ENCODE measurements at regions of chr6 and their contacts with region 1.

Region 1: DNA sequence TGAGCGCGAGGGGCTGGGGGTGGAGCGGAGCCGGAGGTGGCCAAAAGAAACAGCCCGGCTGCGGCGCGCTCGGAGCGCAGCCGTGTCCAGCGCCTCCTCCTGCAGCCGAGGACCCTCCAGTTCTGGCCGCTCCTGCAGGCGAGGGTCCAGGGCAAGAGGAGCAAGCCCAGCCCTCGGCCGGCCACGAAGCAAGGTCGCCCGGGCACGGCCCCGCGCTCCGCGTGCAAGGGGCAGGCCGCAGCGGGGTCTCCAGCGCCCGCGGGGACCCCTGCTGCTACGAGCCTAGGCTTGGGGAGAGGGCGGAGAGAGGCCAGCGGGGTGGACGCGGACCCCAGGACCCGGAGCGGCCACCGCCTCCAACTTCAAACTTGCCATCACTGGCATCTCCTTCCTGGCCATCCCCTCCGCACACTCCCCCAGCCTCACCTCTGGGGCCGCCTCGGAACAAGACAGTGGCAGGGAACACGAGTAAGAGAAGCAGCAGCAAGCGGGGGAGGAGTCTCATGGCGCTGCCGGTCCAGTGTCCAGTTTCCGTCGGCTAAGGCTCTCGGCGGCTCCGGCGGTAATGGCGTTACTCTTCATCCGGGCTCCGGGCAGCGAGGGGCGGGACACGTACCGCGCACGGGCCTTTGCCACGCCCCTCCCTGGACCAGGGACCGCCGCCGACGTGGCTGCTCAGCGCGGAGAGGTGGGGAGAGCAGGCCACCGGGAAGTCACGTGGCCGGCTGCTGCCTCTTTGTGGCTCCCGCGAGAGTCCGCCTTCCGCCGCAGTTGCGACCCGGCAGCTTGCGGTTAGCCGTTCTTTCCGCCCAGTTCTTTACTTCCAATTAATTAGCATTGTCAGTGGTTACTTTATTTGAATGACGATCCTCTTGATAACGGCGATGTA is at the start of gene SSR1:
- DNase-seq: peak; percentile 99
- H3K4me3 Mint-ChIP-seq: peak within 1 kb of the TSS; percentile 96
- H3K27ac Mint-ChIP-seq: peak within 1 kb of the TSS; percentile 98
- H3K4me1 Mint-ChIP-seq: peaks cover 38% of the 10 kb centered on the region
- H3K27me3 Mint-ChIP-seq: no peaks in the 10 kb centered on the region
- total RNA-seq, gene SSR1: 157 and 162 TPM in 2 replicates

Region 2: GRCh38 chr6:7073821-7074525 is 238.9 kb before region 1 on chr6:
- intact Hi-C with region 1: no loop called
- DNase-seq: peak; percentile 89
- H3K4me3 Mint-ChIP-seq: no peak overlapping the region
- H3K27ac Mint-ChIP-seq: peak overlapping the region; percentile 51
- H3K4me1 Mint-ChIP-seq: peaks cover 12% of the 10 kb centered on the region
- H3K27me3 Mint-ChIP-seq: peaks cover 66% of the 10 kb centered on the region

Region 3: GRCh38 chr6:7145885-7146828 is 166.7 kb before region 1 on chr6:
- intact Hi-C with region 1: loop called (anchors 5 kb)
- DNase-seq: peak; percentile 77
- H3K4me3 Mint-ChIP-seq: peak overlapping the region; percentile 67
- H3K27ac Mint-ChIP-seq: peak overlapping the region; percentile 85
- H3K4me1 Mint-ChIP-seq: peaks cover 55% of the 10 kb centered on the region
- H3K27me3 Mint-ChIP-seq: no peaks in the 10 kb centered on the region

Region 4: GRCh38 chr6:7276199-7276524 is 36.7 kb before region 1 on chr6:
- intact Hi-C with region 1: loop called (anchors 5 kb)
- DNase-seq: no peak
- H3K4me3 Mint-ChIP-seq: no peak overlapping the region
- H3K27ac Mint-ChIP-seq: no peak overlapping the region
- H3K4me1 Mint-ChIP-seq: peaks cover 6% of the 10 kb centered on the region
- H3K27me3 Mint-ChIP-seq: no peaks in the 10 kb centered on the region

Region 5: DNA sequence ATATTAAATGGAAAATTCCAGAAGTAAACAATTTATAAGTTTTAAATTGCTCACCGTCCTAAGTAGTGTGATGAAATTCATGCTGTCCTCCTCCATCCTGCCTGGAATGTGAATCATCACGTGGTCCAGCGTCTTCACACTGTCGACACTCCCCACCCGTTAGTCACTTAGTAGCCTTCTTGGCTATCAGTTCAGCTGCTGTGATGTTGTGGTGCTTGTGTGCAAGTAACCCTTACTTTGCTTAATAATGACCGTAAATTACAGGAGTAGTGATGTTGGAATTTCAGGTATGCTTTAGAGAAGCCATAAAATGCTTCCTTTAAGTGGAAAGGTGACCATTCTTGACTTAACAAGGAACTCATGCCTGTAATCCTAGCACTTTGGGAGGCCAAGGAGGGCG is 102.0 kb after region 1 on chr6:
- intact Hi-C with region 1: no loop called
- DNase-seq: no peak
- H3K4me3 Mint-ChIP-seq: no peak overlapping the region
- H3K27ac Mint-ChIP-seq: no peak overlapping the region
- H3K4me1 Mint-ChIP-seq: no peaks in the 10 kb centered on the region
- H3K27me3 Mint-ChIP-seq: no peaks in the 10 kb centered on the region

Region 6: GRCh38 chr6:8102122-8102958 is 789.5 kb after region 1 on chr6 and contains the start of gene EEF1E1:
- intact Hi-C with region 1: loop called (anchors 1 kb)
- DNase-seq: peak; percentile 97
- H3K4me3 Mint-ChIP-seq: peak within 1 kb of the TSS; percentile 95
- H3K27ac Mint-ChIP-seq: peak within 1 kb of the TSS; percentile 99
- H3K4me1 Mint-ChIP-seq: peaks cover 24% of the 10 kb centered on the region
- H3K27me3 Mint-ChIP-seq: peaks cover 15% of the 10 kb centered on the region
- total RNA-seq, gene EEF1E1: 93.6 and 95.9 TPM in 2 replicates

Measured in activated CD4-positive, alpha-beta T cell treated with anti-CD3 and anti-CD28 coated beads, Interleukin-2, amount 10 ng/mL, durations not matched to agents 24 days and 14 days (primary cell).